Activated CD4-positive, alpha-beta T cell treated with anti-CD3 and anti-CD28 coated beads for 36 hours (primary cell): ENCODE measurements at regions of chr1 and their contacts with region 1.

Region 1: DNA sequence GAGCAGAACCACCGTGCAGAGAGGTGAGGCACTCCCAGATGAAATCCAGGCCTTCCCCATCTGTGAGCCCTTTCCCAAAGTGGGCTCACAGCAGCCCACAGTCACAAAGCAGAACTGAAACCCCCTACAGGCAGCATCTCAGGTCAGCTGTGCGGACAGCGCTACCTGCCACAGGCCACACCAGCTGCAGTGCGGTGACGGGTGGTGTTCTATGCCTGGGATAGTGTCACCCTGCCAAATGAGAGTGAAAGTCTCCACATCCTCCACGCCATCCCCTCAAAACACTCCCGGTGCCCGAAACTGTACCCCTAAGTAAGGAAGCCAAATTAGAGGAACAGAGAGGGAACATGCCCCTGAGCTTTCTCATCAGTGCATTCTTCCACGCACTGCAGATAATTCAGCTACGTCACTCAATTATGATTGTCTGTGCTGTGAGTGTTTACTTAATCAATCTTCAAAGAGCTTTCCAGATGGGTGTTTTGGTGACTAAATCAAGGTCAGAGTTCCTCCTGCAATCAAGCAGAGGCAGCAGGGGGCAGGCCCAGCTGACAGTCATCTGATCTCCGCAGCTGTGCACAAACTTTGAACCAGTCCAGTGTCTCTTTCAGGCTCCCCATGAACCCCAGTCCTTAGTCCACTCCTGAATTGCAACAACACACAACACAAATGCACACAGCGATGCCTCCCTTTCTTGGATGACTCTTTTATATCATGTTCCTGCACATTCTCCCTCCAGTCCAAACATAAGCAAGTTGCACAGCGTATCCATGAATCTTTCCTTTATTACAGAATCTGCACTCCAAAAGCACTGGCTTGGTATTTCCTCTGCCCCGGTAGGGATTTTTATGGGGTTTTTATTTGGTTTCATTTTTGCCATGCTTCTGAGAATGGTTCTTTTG is 150.0 kb downstream of the TOMM20 start:
- DNase-seq: peak; percentile 80
- ATAC-seq: peak; percentile 62
- H3K4me3 Mint-ChIP-seq: peak overlapping the region; percentile 75
- H3K27ac Mint-ChIP-seq: peak overlapping the region; percentile 98
- H3K4me1 Mint-ChIP-seq: peaks cover 66% of the 10 kb centered on the region
- H3K27me3 Mint-ChIP-seq: no peaks in the 10 kb centered on the region

Region 2: GRCh38 chr1:234730770-234731568 is 247.7 kb before region 1 on chr1:
- CTCF ChIA-PET with region 1: no interaction called
- POLR2A ChIA-PET with region 1: no interaction called
- intact Hi-C with region 1: loop called in 1 of 2 experiments (anchors 1 kb)
- DNase-seq: peak; percentile 77
- ATAC-seq: peak; percentile 87
- H3K4me3 Mint-ChIP-seq: peak overlapping the region; percentile 32
- H3K27ac Mint-ChIP-seq: peak overlapping the region; percentile 92
- H3K4me1 Mint-ChIP-seq: peaks cover 71% of the 10 kb centered on the region
- H3K27me3 Mint-ChIP-seq: no peaks in the 10 kb centered on the region

Region 3: GRCh38 chr1:234881893-234882771 is 96.5 kb before region 1 on chr1:
- CTCF ChIA-PET with region 1: no interaction called
- POLR2A ChIA-PET with region 1: no interaction called
- intact Hi-C with region 1: loop called in 1 of 2 experiments (anchors 1 kb)
- DNase-seq: peak; percentile 46
- ATAC-seq: peak; percentile 83
- H3K4me3 Mint-ChIP-seq: no peak overlapping the region
- H3K27ac Mint-ChIP-seq: no peak overlapping the region
- H3K4me1 Mint-ChIP-seq: peaks cover 42% of the 10 kb centered on the region
- H3K27me3 Mint-ChIP-seq: no peaks in the 10 kb centered on the region